ENCODE measurements at regions of chr9 and their contacts with region 1.

Region 1: GRCh38 chr9:68446836-68447235 is 90.4 kb downstream of the PGM5 start:
- DNase-seq: peak in 2 of 3 donors; percentile 22 to 62
- ATAC-seq: peak; percentile 20 to 54
- H3K4me3 ChIP-seq: no peak overlapping the region
- H3K27ac ChIP-seq: peak overlapping the region; percentile 70
- H3K4me1 ChIP-seq: peaks cover 12% of the 10 kb centered on the region
- H3K27me3 ChIP-seq: no peaks in the 10 kb centered on the region

Region 2: DNA sequence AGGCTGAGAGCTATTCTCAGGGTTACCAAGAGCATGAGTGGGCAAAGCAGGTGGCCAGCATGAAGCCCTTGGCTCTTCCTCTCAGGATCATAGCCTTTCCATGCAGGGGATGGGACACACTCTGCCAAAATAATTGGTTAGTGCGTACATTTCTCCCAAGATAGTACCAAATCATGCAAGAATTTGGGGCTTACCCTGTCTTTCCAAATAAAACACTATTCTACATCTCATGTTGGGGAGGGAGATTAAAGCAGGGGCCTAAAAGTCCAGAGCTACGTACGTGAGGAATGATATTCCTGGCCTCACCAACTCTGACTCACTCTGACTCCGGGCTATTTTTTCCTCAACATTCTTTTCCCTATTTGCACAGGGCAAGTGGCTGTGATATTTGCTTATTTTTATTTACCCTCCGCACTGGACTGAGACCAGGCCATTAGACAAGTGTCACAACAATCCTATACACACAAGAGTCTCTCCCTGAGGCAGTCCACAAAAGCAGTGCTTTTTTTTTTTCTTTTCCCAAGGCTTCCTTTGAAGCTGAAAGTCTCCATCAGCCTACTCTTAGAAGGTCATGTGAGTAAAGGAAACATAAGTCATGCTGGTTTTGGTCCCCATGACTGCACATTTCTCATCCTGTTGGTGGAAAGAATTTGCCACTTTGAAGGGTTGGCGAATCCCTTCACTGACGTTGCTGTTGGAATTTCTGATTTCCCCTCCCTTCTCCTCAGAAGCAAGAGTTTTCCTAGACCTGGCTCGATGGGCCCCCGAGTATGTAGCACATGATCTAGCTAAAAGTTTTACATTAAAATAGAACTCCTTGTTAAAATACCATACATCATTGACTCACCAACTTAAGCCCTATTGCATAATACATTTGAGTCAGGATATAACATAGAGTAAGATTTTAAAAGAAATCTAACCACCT is 53.9 kb after region 1 on chr9:
- intact Hi-C with region 1: no loop called
- DNase-seq: no peak
- ATAC-seq: peak; percentile 73 to 76
- H3K4me3 ChIP-seq: no peak overlapping the region
- H3K27ac ChIP-seq: peak overlapping the region; percentile 100
- H3K4me1 ChIP-seq: peaks cover 16% of the 10 kb centered on the region
- H3K27me3 ChIP-seq: no peaks in the 10 kb centered on the region

Region 3: GRCh38 chr9:68522131-68522530 is 75.3 kb after region 1 on chr9:
- intact Hi-C with region 1: loop called in 1 of 4 experiments (anchors 10 kb)
- DNase-seq: no peak
- ATAC-seq: peak; percentile 54 to 55
- H3K4me3 ChIP-seq: no peak overlapping the region
- H3K27ac ChIP-seq: no peak overlapping the region
- H3K4me1 ChIP-seq: peaks cover 4% of the 10 kb centered on the region
- H3K27me3 ChIP-seq: no peaks in the 10 kb centered on the region

Measured in right cardiac atrium (tissue), 5 donors.